Activated naive CD4-positive, alpha-beta T cell treated with anti-CD3 and anti-CD28 coated beads, Interleukin-2, amount 10 ng/mL, durations not matched to agents 7 days and 5 days (primary cell): ENCODE measurements at regions of chr5 and their contacts with region 1.

Region 1: DNA sequence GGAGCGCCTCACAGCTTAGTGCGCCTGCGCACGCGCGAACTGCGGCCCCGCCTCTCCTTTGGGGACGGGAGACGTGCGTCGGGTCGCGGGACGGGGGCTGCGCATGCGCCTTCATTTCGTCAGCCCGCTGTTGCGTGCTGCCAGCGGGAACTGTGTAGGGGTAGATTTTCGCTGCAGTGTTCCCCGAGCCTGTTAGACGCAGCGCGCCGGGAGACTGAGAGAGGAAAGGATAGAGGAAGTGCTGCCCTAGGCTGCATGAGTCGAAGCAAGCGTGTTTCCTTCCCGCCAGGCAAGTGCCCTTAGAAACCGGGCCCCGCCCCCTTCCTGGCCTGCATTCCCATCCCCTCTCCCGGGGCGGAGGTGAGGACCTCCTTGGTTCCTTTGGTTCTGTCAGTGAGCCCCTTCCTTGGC is 12.3 kb downstream of the ITGA1 start:
- DNase-seq: peak; percentile 96
- H3K4me3 Mint-ChIP-seq: peak overlapping the region; percentile 86
- H3K27ac Mint-ChIP-seq: peak overlapping the region; percentile 91
- H3K4me1 Mint-ChIP-seq: peaks cover 58% of the 10 kb centered on the region
- H3K27me3 Mint-ChIP-seq: peaks cover 12% of the 10 kb centered on the region

Region 2: GRCh38 chr5:52693280-52693679 is 106.7 kb before region 1 on chr5:
- CTCF ChIA-PET with region 1: interaction called, 17 read pairs
- DNase-seq: peak; percentile 55
- H3K4me3 Mint-ChIP-seq: no peak overlapping the region
- H3K27ac Mint-ChIP-seq: no peak overlapping the region
- H3K4me1 Mint-ChIP-seq: no peaks in the 10 kb centered on the region
- H3K27me3 Mint-ChIP-seq: no peaks in the 10 kb centered on the region

Region 3: DNA sequence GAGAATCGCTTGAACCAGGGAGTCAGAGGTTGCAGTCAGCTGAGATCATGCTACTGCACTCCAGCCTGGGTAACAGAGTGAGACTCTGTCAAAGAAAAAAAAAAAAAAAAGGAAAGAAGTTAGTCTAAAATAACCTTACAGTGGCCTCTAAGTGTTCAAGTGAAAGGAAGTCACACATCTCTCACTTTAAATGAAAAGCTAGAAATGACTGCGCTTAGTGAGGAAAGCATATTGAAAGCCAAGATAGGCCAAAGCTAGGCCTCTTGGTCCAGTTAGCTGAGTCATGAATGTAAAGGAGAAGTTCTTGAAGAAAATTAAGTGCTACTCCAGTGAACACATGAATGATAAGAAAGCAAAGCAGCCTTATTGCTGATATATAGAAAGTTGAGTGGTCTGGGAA is 25.8 kb after region 1 on chr5:
- CTCF ChIA-PET with region 1: no interaction called
- DNase-seq: no peak
- H3K4me3 Mint-ChIP-seq: no peak overlapping the region
- H3K27ac Mint-ChIP-seq: no peak overlapping the region
- H3K4me1 Mint-ChIP-seq: peaks cover 4% of the 10 kb centered on the region
- H3K27me3 Mint-ChIP-seq: no peaks in the 10 kb centered on the region